PC-9 (cell line): ENCODE measurements at regions of chr17 and their contacts with region 1.

Region 1: GRCh38 chr17:50707289-50708049 is at the start of gene ANKRD40:
- DNase-seq: peak; percentile 85 to 92
- H3K4me3 ChIP-seq: peak within 1 kb of the TSS; percentile 79
- H3K27ac ChIP-seq: peak within 1 kb of the TSS; percentile 86
- H3K4me1 ChIP-seq: peaks cover 26% of the 10 kb centered on the region
- H3K27me3 ChIP-seq: no peaks in the 10 kb centered on the region
- CTCF ChIP-seq: no peak
- total RNA-seq, gene ANKRD40: 24.4 and 33.5 TPM in 2 replicates

Region 2: DNA sequence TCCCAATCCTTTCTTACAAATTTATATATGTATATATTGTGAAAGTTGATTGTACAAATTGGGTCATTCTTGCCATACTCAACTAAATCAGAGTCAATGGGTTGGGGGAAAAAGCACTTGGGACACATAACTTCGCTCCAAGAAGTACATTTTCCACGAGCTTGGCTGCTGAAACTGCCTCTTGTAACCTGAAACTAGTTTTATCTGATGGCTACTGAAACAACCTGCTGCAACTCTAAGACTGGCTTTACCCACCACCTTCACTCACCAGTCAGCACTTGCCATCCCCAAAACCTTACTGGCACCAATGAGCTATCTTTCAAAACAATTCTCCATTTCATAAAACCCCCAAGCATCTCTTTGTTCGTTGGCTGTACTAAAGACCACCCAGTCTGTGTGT is 213.7 kb before region 1 on chr17:
- CTCF ChIA-PET with region 1: no interaction called
- POLR2A ChIA-PET with region 1: interaction called, 18 read pairs
- intact Hi-C with region 1: no loop called
- DNase-seq: no peak
- H3K4me3 ChIP-seq: no peak overlapping the region
- H3K27ac ChIP-seq: peak overlapping the region; percentile 7; the same call in 1 of the 2 replicates
- H3K4me1 ChIP-seq: peaks cover 27% of the 10 kb centered on the region
- H3K27me3 ChIP-seq: no peaks in the 10 kb centered on the region
- CTCF ChIP-seq: no peak

Region 3: GRCh38 chr17:50719144-50719923 is 11.9 kb after region 1 on chr17 and contains the start of gene LUC7L3:
- CTCF ChIA-PET with region 1: no interaction called
- POLR2A ChIA-PET with region 1: no interaction called
- intact Hi-C with region 1: loop called (anchors 1 kb)
- DNase-seq: peak; percentile 85 to 94
- H3K4me3 ChIP-seq: peak within 1 kb of the TSS; percentile 92
- H3K27ac ChIP-seq: peak within 1 kb of the TSS; percentile 95
- H3K4me1 ChIP-seq: peaks cover 55% of the 10 kb centered on the region
- H3K27me3 ChIP-seq: no peaks in the 10 kb centered on the region
- CTCF ChIP-seq: 0 out of 2 replicates have a peak, but pooled peaks have one; percentile 13
- total RNA-seq, gene LUC7L3: 147 and 212 TPM in 2 replicates